ENCODE measurements at regions of chr9 and their contacts with region 1.

Region 1: DNA sequence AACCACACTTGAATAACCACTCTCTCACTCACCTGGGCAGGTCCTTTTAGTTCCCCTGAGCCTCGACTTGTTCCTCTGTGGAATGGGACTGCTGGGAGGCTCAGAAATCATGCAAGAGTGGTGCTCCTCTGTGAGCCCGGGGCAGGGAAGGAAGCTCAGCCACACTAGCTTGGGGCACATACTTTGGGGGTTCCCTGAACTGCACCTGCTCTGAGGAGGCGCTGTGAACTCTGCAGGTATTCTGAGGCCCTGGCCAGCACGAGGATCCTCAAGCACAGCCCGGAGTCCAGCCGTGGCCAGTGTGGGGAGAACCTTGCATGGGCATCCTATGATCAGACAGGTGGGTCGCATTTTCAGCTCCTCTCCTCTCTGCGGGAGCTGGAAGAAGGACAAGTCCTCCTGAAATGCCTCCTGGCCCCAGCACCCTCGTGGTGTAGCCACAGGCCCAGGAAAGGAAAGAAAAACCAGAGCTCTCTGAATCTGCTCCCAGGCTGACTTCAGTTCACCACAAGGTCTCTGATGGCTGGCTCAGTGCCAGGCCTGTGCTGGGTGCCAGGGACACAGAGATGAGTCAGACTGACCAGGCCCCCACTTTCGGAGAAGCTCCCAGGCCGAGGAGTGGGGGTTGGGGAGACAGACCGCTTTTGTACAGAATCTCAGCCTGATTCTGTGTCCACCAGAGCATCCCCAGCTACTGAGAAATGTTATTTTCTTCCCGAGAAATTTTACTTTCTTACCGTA is 11.9 kb downstream of the GLIPR2 start:
- DNase-seq: peak; percentile 88
- H3K4me3 Mint-ChIP-seq: no peak overlapping the region
- H3K27ac Mint-ChIP-seq: peak overlapping the region; percentile 30
- H3K4me1 Mint-ChIP-seq: peaks cover 84% of the 10 kb centered on the region
- H3K27me3 Mint-ChIP-seq: no peaks in the 10 kb centered on the region

Region 2: DNA sequence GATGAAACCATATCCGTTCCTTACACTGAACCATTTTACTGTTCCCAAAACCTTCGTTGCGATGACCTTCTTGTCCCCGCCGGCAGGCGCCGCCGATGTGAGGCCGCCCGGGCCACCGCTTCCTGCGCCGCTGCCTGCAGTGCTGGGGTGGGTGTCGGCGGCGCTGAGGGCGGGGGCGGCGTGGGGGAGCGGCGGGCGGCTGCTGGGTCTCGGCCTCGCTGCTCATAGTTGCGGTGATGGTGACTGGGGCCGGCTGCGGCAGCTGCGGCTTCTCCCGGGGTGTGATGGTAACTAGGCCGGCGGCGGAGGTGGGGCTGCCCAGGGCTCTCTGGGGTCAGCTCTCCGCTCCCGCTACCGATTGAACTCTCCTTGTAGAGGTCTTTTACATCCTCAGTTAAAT is 176.4 kb before region 1 on chr9:
- CTCF ChIA-PET with region 1: no interaction called
- POLR2A ChIA-PET with region 1: no interaction called
- intact Hi-C with region 1: no loop called
- DNase-seq: peak; percentile 33
- H3K4me3 Mint-ChIP-seq: no peak overlapping the region
- H3K27ac Mint-ChIP-seq: no peak overlapping the region
- H3K4me1 Mint-ChIP-seq: peaks cover 4% of the 10 kb centered on the region
- H3K27me3 Mint-ChIP-seq: peaks cover 51% of the 10 kb centered on the region

Region 3: GRCh38 chr9:36053971-36054370 is 94.5 kb before region 1 on chr9:
- CTCF ChIA-PET with region 1: no interaction called
- POLR2A ChIA-PET with region 1: no interaction called
- intact Hi-C with region 1: no loop called
- DNase-seq: no peak
- H3K4me3 Mint-ChIP-seq: no peak overlapping the region
- H3K27ac Mint-ChIP-seq: no peak overlapping the region
- H3K4me1 Mint-ChIP-seq: no peaks in the 10 kb centered on the region
- H3K27me3 Mint-ChIP-seq: no peaks in the 10 kb centered on the region

Region 4: GRCh38 chr9:36136272-36136893 is 12.1 kb before region 1 on chr9 and contains the start of gene GLIPR2:
- CTCF ChIA-PET with region 1: interaction called, 6 read pairs
- POLR2A ChIA-PET with region 1: interaction called, 6 read pairs
- intact Hi-C with region 1: loop called (anchors 1 kb)
- DNase-seq: peak; percentile 84
- H3K4me3 Mint-ChIP-seq: peak within 1 kb of the TSS; percentile 79
- H3K27ac Mint-ChIP-seq: peak within 1 kb of the TSS; percentile 48
- H3K4me1 Mint-ChIP-seq: peaks cover 45% of the 10 kb centered on the region
- H3K27me3 Mint-ChIP-seq: no peaks in the 10 kb centered on the region
- total RNA-seq, gene GLIPR2: 24.7 to 25.8 TPM

Region 5: DNA sequence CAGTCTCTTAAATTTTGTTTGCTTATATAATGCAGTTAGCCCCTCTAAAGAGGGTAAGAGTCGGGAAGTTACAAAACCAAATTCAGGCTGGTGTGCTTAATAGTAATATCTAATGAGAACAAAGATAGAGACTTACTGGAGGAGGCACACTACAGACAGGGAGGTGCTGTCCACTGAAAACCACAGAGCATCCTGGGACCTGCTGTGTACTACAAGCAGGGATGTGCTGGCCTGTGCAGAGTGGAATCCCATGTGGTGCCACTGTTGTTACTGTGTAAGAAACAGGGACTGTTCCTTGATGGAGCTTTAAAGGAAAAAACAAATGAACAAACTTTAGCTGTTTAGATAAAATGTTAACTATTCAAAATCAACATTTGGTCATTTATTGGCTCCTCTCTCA is 209.2 kb after region 1 on chr9:
- CTCF ChIA-PET with region 1: no interaction called
- POLR2A ChIA-PET with region 1: no interaction called
- intact Hi-C with region 1: no loop called
- DNase-seq: no peak
- H3K4me3 Mint-ChIP-seq: no peak overlapping the region
- H3K27ac Mint-ChIP-seq: no peak overlapping the region
- H3K4me1 Mint-ChIP-seq: peaks cover 6% of the 10 kb centered on the region
- H3K27me3 Mint-ChIP-seq: no peaks in the 10 kb centered on the region

Measured in activated CD4-positive, alpha-beta memory T cell treated with anti-CD3 and anti-CD28 coated beads for 36 hours (primary cell).